Transverse colon (tissue), 4 donors: ENCODE measurements at regions of chr1 and their contacts with region 1.

Region 1: DNA sequence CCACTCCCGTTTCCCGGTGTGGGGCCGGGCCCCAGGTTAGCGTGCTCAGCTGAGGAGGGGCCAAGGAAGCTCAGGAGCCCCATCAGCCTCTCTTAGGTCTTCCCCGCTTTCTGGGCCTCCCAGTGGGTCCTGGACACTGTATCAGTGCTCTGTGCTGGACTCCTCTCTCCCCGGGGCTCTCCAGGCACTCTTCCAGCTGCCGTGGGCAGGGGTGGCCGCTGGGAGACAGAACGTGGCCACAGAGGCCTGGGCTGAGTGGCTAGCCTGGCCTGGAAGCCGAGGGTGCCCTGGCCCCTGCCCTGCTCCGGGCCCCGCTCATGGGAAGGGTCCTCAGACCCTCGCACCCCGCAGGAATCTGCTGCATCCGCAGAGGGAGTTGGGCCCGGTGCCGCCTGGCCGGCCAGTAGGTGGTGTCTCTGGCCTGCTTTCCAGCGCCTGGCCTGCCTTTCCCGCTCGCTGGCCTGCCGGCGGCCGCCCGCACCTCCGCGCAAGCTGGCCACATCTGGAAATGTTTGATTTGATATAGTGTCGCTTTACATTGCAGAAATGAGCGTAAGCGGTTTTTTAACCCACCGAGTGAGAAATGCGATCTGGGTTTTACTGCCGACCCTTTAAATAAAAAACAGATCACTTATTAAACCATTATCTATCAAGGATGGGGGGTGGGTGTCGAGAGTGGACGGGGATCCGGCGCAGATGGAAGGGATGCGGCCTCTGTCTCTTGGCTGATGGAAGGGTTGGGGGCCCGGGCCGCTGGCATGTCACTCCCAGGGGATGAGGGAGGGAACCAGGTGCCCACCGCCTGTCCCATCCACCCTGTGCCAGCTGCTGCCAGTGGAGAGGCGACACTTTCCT is 74.4 kb upstream of the TTC34 start:
- DNase-seq: no peak
- H3K4me3 ChIP-seq: no peak overlapping the region
- H3K27ac ChIP-seq: no peak overlapping the region
- H3K4me1 ChIP-seq: peaks cover 0 to 15% (median 0%) of the 10 kb centered on the region in 4 donors
- H3K27me3 ChIP-seq: peaks cover 13% of the 10 kb centered on the region
- CTCF ChIP-seq: peak in 4 of 5 experiments; percentile 27 to 44 (median 36)
- EP300 ChIP-seq: no peak
- POLR2A ChIP-seq: no peak

Region 2: DNA sequence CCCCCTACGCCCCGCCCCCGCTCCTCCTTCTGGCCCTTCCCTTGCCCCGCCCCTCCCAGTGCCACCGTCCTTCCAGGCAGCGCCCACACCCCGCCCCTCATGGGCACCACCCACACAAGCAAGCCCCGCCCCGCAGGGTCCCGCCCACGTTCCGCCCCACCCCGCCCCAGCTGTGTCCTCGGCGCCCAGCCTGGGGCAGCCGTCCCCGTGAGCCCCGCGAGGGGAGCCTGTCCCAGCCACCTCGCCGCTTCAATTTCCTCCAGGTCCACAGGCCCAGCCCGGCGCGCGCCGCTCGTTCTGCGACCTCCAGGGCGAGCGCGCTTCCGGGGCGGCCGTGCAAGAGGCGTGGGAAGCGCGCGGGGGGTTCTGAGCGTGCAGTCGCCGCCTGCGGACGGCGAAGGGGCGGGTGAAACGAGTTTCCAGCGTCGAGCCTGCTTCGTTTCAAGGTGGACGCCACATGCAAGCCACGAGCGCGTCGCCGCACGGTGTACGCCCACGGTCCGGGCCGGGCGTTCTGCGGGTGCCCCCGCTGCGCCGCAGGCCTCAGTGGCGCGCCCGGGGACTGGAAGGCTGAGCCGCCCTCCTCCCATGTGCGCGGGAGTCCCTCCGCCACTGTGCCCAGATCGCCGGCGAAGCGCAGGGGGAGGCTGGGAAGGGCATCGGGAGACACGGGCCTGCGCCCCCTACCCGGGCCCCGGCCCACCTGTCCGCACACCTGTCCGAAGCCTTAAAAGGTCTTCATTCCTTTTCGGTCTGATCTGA is 670.6 kb before region 1 on chr1:
- in situ Hi-C with region 1: no loop called
- intact Hi-C with region 1: no loop called
- DNase-seq: peak; percentile 98
- H3K4me3 ChIP-seq: peak overlapping the region; percentile 42 to 59 (median 51)
- H3K27ac ChIP-seq: peak overlapping the region; percentile 76 to 92 (median 90)
- H3K4me1 ChIP-seq: peaks cover 27 to 56% (median 41%) of the 10 kb centered on the region in 4 donors
- H3K27me3 ChIP-seq: no peaks in the 10 kb centered on the region
- CTCF ChIP-seq: peak in 3 of 5 experiments; percentile 13 to 40 (median 25)
- EP300 ChIP-seq: no peak
- POLR2A ChIP-seq: peak; percentile 51

Region 3: GRCh38 chr1:3410142-3410925 is 534.4 kb after region 1 on chr1:
- in situ Hi-C with region 1: no loop called
- intact Hi-C with region 1: loop called (anchors 10 kb)
- DNase-seq: peak; percentile 33
- H3K4me3 ChIP-seq: no peak overlapping the region
- H3K27ac ChIP-seq: no peak overlapping the region
- H3K4me1 ChIP-seq: no peaks in the 10 kb centered on the region
- H3K27me3 ChIP-seq: no peaks in the 10 kb centered on the region
- CTCF ChIP-seq: peak; percentile 40 to 56 (median 54)
- EP300 ChIP-seq: no peak
- POLR2A ChIP-seq: no peak